Dendritic cell treated with granulocyte-macrophage colony-stimulating factor and Interleukin-4, amounts not matched to agents 40 ng/mL and 50 ng/mL, for 4 days (primary cell): ENCODE measurements at regions of chr2 and their contacts with region 1.

Region 1: GRCh38 chr2:181235683-181236459 is 221.3 kb upstream of the ITGA4 start:
- H3K4me3 Mint-ChIP-seq: no peak overlapping the region
- H3K27ac Mint-ChIP-seq: no peak overlapping the region
- H3K4me1 Mint-ChIP-seq: peaks cover 31% of the 10 kb centered on the region
- H3K27me3 Mint-ChIP-seq: no peaks in the 10 kb centered on the region

Region 2: DNA sequence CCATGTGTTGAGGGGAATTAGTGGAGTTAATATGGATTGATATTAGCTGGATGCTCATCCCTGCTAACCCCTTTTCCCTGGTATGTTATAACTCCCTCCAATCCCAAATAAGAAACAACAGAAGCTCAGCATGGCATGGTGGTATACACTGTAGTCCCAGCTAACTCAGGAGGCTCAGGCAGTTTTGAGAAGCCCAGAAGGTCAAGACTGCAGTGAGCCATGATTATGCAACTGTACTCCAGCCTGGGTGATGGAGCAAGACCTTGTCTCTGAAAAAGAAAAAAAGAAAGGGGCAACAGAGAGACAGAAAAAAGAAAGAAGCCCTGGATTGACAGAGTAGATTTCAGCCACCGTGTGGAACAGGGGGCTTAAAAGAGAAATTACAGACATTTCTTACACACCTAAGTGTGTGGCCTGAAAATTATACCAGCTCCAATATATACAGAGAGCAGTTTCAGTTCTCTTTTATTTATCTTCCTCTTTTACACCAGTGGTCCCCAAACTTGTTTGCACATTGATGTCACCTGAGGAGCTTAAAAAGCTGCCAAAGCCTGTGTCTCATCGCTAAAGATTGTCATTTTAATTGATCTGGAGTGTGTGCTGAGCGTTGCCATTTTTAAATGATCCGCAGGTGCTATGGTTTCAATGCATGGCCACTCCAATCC is 51.9 kb before region 1 on chr2:
- intact Hi-C with region 1: loop called (anchors 10 kb)
- H3K4me3 Mint-ChIP-seq: no peak overlapping the region
- H3K27ac Mint-ChIP-seq: no peak overlapping the region
- H3K4me1 Mint-ChIP-seq: peaks cover 26% of the 10 kb centered on the region
- H3K27me3 Mint-ChIP-seq: no peaks in the 10 kb centered on the region

Region 3: GRCh38 chr2:181924336-181924735 is 688.5 kb after region 1 on chr2:
- intact Hi-C with region 1: no loop called
- H3K4me3 Mint-ChIP-seq: no peak overlapping the region
- H3K27ac Mint-ChIP-seq: no peak overlapping the region
- H3K4me1 Mint-ChIP-seq: peaks cover 5% of the 10 kb centered on the region
- H3K27me3 Mint-ChIP-seq: no peaks in the 10 kb centered on the region